ENCODE measurements at regions of chr2 and their contacts with region 1.

Region 1: GRCh38 chr2:118882709-118883210 is 35.3 kb upstream of the EN1 start:
- DNase-seq: peak; percentile 67
- ATAC-seq: peak; percentile 88
- H3K4me3 Mint-ChIP-seq: peak overlapping the region; percentile 66
- H3K27ac Mint-ChIP-seq: no peak overlapping the region
- H3K4me1 Mint-ChIP-seq: peaks cover 18% of the 10 kb centered on the region
- H3K27me3 Mint-ChIP-seq: peaks cover 7% of the 10 kb centered on the region
- CTCF ChIP-seq: peak; percentile 81

Region 2: GRCh38 chr2:118893100-118893499 is 10.3 kb after region 1 on chr2:
- CTCF ChIA-PET with region 1: interaction called, 16 read pairs
- POLR2A ChIA-PET with region 1: no interaction called
- intact Hi-C with region 1: no loop called
- DNase-seq: no peak
- ATAC-seq: no peak
- H3K4me3 Mint-ChIP-seq: no peak overlapping the region
- H3K27ac Mint-ChIP-seq: no peak overlapping the region
- H3K4me1 Mint-ChIP-seq: no peaks in the 10 kb centered on the region
- H3K27me3 Mint-ChIP-seq: peaks cover 1% of the 10 kb centered on the region
- CTCF ChIP-seq: no peak

Region 3: DNA sequence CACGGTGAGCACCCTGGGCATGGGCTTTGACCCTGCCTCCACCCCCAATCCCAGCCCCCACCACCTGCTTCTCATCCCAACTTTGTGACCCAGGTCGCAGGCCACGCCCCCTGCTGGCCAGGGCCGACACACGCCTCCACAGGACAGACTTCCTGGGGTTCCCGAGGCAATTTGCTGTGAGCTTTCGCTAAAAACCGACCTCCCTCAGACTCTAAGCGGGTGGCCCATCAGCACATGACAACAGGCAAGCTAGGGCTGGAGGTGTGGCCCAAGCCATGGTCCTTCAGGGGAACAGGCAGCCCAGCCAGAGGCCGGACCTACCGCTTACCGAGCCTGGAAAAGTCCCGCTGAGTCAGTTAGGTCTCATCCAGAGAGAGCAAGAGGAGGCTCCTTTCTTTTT is 243.9 kb after region 1 on chr2:
- CTCF ChIA-PET with region 1: interaction called, 13 read pairs
- POLR2A ChIA-PET with region 1: no interaction called
- intact Hi-C with region 1: loop called (anchors 2 kb)
- DNase-seq: peak; percentile 46
- ATAC-seq: no peak
- H3K4me3 Mint-ChIP-seq: no peak overlapping the region
- H3K27ac Mint-ChIP-seq: no peak overlapping the region
- H3K4me1 Mint-ChIP-seq: no peaks in the 10 kb centered on the region
- H3K27me3 Mint-ChIP-seq: peaks cover 8% of the 10 kb centered on the region
- CTCF ChIP-seq: peak; percentile 49

Region 4: GRCh38 chr2:119137502-119137901 is 254.7 kb after region 1 on chr2:
- CTCF ChIA-PET with region 1: no interaction called
- POLR2A ChIA-PET with region 1: no interaction called
- intact Hi-C with region 1: no loop called
- DNase-seq: peak; percentile 19
- ATAC-seq: no peak
- H3K4me3 Mint-ChIP-seq: no peak overlapping the region
- H3K27ac Mint-ChIP-seq: no peak overlapping the region
- H3K4me1 Mint-ChIP-seq: no peaks in the 10 kb centered on the region
- H3K27me3 Mint-ChIP-seq: peaks cover 2% of the 10 kb centered on the region
- CTCF ChIP-seq: no peak

Region 5: DNA sequence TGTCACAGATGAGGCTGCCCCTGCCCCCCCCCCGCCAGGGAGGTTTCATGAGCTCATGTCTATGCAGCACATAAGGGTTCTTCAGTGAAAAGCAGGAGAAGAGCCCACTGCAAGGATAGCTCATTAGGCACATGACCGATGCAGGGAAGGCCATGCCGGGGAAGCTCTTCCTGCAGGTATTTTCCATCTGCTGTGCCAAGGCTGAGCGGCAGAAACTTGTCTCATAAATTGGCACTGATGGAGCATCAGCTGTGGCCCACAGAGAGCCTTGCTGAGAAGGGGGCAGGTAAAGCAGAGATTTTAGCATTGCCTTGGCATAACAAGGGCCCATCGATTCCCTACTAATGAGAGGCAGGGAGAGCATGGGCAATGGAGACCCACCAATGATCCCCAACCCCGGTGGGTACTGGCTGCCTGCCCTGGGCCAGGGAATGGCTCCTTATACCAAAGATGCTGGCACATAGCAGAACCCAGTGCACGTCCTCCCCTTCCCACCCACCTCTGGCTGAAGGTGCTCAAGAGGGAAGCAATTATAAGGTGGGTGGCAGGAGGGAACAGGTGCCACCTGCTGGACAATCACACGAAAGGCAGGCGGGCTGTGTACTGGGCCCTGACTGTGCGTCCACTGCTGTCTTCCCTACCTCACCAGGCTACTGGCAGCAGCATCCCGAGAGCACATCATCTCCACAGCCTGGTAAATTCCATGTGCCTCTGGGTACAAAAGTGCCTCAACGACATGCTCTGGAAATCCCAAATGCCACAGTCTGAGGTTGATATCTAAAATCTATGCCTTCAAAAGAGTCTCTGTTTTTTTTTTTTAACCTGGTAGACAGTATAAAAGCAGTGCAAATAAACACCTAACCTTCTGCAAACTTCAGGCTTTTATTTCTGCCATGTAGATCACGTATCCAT is 382.3 kb after region 1 on chr2:
- CTCF ChIA-PET with region 1: interaction called, 7 read pairs
- POLR2A ChIA-PET with region 1: interaction called, 3 read pairs
- intact Hi-C with region 1: loop called (anchors 5 kb)
- DNase-seq: peak; percentile 54
- ATAC-seq: peak; percentile 79
- H3K4me3 Mint-ChIP-seq: no peak overlapping the region
- H3K27ac Mint-ChIP-seq: no peak overlapping the region
- H3K4me1 Mint-ChIP-seq: no peaks in the 10 kb centered on the region
- H3K27me3 Mint-ChIP-seq: no peaks in the 10 kb centered on the region
- CTCF ChIP-seq: peak; percentile 66